ENCODE measurements at regions of chr13 and their contacts with region 1.

Region 1: GRCh38 chr13:99606324-99607066 is 105.2 kb downstream of the TM9SF2 start:
- DNase-seq: peak; percentile 82 to 95 (median 91)
- ATAC-seq: peak; percentile 93
- H3K4me3 ChIP-seq: peak within 1 kb of the TSS; percentile 89 to 93
- H3K4me3 Mint-ChIP-seq: peak within 1 kb of the TSS; percentile 92
- H3K27ac ChIP-seq: peak within 1 kb of the TSS; percentile 72 to 81
- H3K27ac Mint-ChIP-seq: peak within 1 kb of the TSS; percentile 92
- H3K4me1 ChIP-seq: peaks cover 23% of the 10 kb centered on the region
- H3K4me1 Mint-ChIP-seq: peaks cover 45% of the 10 kb centered on the region
- H3K27me3 ChIP-seq: no peaks in the 10 kb centered on the region
- H3K27me3 Mint-ChIP-seq: no peaks in the 10 kb centered on the region
- CTCF ChIP-seq: no peak

Region 2: DNA sequence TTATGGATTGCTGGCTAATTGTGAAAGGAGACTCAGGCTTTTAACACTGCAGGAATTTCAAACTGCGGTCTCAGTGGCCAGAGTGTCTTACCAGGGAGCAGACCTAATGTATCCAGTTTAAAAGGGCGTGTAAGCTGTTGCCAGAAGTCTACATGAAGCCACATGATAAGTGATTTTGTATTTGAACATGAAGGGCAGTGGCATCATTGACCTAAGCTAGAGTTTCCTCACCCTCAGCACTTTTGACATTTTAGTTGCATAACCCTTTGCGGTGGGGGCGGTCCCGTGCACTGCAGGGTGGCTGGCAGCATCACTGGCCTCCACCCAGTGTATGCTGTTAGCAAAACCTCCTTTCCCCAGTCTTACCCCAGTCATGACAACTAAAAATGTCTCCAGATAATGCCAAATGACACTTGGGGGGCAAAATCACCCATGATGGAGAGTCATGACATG is 324.7 kb before region 1 on chr13:
- CTCF ChIA-PET with region 1: no interaction called
- POLR2A ChIA-PET with region 1: no interaction called
- intact Hi-C with region 1: loop called in 1 of 2 experiments (anchors 10 kb)
- DNase-seq: peak in 6 of 9 experiments; percentile 59 to 81 (median 71)
- ATAC-seq: peak; percentile 65
- H3K4me3 ChIP-seq: no peak overlapping the region
- H3K4me3 Mint-ChIP-seq: peak overlapping the region; percentile 38
- H3K27ac ChIP-seq: peak overlapping the region; percentile 53 to 73
- H3K27ac Mint-ChIP-seq: peak overlapping the region; percentile 95
- H3K4me1 ChIP-seq: peaks cover 92% of the 10 kb centered on the region
- H3K4me1 Mint-ChIP-seq: peaks cover 90% of the 10 kb centered on the region
- H3K27me3 ChIP-seq: no peaks in the 10 kb centered on the region
- H3K27me3 Mint-ChIP-seq: no peaks in the 10 kb centered on the region
- CTCF ChIP-seq: no peak

Region 3: DNA sequence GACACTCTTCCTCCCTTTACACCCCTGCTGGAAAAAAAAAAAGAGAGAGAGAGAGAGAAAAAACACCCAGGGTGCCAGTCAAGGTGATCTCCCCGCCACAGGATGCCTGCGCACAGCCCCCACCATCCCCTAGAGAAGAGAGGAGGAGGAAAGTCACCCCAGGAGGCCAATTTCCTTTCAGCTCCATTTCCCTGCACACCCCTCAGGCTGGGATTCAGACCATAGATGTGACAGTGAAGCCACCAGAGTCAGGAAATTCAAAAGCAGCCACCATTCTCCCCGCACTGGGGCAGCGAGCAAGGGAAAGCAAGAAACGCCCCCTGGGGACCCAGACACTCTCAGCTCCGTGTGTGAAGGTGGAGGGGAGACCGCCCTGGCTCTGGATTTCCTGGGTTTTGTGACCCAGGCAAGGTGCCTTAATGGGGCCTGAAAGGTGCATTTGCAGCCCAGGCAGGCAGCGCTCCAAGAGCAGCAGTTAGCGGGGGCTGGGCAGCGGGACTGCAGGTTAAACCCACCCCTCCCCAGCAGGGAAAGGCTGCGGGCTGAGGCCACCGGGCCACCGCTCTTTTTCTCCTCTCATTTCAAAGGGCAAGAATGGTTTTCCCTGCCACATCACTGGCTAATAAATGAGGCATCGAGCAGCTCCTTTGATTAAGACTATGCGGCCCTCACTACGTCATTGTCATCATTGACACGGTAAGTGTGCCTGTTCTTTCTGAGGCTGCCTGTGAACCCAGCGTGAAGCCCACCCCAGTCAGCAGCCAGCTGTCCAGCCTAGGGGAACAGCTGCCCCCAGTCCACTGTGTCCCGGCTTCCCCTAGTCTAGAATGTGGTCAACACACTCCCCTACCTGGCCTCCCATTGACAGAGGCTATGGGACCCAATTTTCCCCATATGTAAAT is 189.0 kb before region 1 on chr13:
- CTCF ChIA-PET with region 1: no interaction called
- POLR2A ChIA-PET with region 1: no interaction called
- intact Hi-C with region 1: no loop called
- DNase-seq: peak in 4 of 9 experiments; percentile 43 to 77 (median 64)
- ATAC-seq: peak; percentile 36
- H3K4me3 ChIP-seq: peak overlapping the region; percentile 35 to 57
- H3K4me3 Mint-ChIP-seq: no peak overlapping the region
- H3K27ac ChIP-seq: peak overlapping the region; percentile 43 to 60
- H3K27ac Mint-ChIP-seq: no peak overlapping the region
- H3K4me1 ChIP-seq: peaks cover 96% of the 10 kb centered on the region
- H3K4me1 Mint-ChIP-seq: peaks cover 63% of the 10 kb centered on the region
- H3K27me3 ChIP-seq: no peaks in the 10 kb centered on the region
- H3K27me3 Mint-ChIP-seq: no peaks in the 10 kb centered on the region
- CTCF ChIP-seq: no peak

Region 4: GRCh38 chr13:99564386-99564785 is 42.1 kb before region 1 on chr13:
- CTCF ChIA-PET with region 1: no interaction called
- POLR2A ChIA-PET with region 1: no interaction called
- intact Hi-C with region 1: loop called in 1 of 2 experiments (anchors 5 kb)
- DNase-seq: no peak
- ATAC-seq: no peak
- H3K4me3 ChIP-seq: no peak overlapping the region
- H3K4me3 Mint-ChIP-seq: no peak overlapping the region
- H3K27ac ChIP-seq: no peak overlapping the region
- H3K27ac Mint-ChIP-seq: no peak overlapping the region
- H3K4me1 ChIP-seq: peaks cover 5% of the 10 kb centered on the region
- H3K4me1 Mint-ChIP-seq: peaks cover 6% of the 10 kb centered on the region
- H3K27me3 ChIP-seq: no peaks in the 10 kb centered on the region
- H3K27me3 Mint-ChIP-seq: no peaks in the 10 kb centered on the region
- CTCF ChIP-seq: no peak

Region 5: DNA sequence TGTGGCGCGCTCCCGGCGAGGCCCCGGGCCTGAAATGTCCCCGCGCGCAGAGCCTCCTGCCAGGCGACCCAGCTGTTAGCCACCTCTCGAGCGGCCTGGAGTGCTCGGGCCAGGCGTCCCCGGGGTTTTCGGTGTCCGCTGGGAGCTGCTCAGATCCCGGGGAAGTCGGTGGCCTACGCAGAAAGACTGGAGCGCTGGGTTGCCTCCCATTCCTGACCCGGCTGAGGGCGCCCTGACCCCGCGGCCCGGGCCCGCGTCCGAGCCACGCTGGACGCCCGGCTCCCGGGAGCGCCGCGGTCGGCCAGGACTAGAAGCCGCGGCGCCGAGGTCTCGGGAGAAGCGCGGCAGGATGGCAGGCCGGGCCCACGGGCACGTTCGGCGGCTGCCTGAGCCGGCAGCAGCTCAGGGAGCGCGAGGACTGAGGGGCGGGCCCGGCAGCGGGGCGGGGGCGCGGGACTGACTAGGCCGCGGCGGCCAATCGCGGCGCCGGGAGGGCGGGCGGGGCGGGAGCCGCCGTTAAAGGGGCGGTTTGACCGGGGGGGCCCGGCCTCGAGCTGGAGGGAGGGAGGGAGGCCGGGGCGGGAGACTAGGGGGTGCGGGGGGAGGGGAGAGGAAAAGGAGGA is 373.8 kb after region 1 on chr13:
- CTCF ChIA-PET with region 1: no interaction called
- POLR2A ChIA-PET with region 1: no interaction called
- intact Hi-C with region 1: loop called in 1 of 2 experiments (anchors 5 kb)
- DNase-seq: peak in 7 of 9 experiments; percentile 33 to 74 (median 65)
- ATAC-seq: peak; percentile 84
- H3K4me3 ChIP-seq: peak overlapping the region in 1 of 2 experiments; percentile 36
- H3K4me3 Mint-ChIP-seq: no peak overlapping the region
- H3K27ac ChIP-seq: no peak overlapping the region
- H3K27ac Mint-ChIP-seq: no peak overlapping the region
- H3K4me1 ChIP-seq: peaks cover 25% of the 10 kb centered on the region
- H3K4me1 Mint-ChIP-seq: peaks cover 14% of the 10 kb centered on the region
- H3K27me3 ChIP-seq: peaks cover 66 to 70% of the 10 kb centered on the region in 2 experiments
- H3K27me3 Mint-ChIP-seq: peaks cover 62% of the 10 kb centered on the region
- CTCF ChIP-seq: no peak

Region 6: GRCh38 chr13:100588331-100589177 is 982.1 kb after region 1 on chr13 and contains the start of gene GGACT:
- CTCF ChIA-PET with region 1: no interaction called
- POLR2A ChIA-PET with region 1: no interaction called
- intact Hi-C with region 1: loop called in 1 of 2 experiments (anchors 5 kb)
- DNase-seq: peak; percentile 68 to 93 (median 85)
- ATAC-seq: peak; percentile 95
- H3K4me3 ChIP-seq: peak within 1 kb of the TSS; percentile 65 to 70
- H3K4me3 Mint-ChIP-seq: peak within 1 kb of the TSS; percentile 84
- H3K27ac ChIP-seq: peak within 1 kb of the TSS; percentile 80 to 82
- H3K27ac Mint-ChIP-seq: peak within 1 kb of the TSS; percentile 89
- H3K4me1 ChIP-seq: peaks cover 39% of the 10 kb centered on the region
- H3K4me1 Mint-ChIP-seq: peaks cover 44% of the 10 kb centered on the region
- H3K27me3 ChIP-seq: no peaks in the 10 kb centered on the region
- H3K27me3 Mint-ChIP-seq: no peaks in the 10 kb centered on the region
- CTCF ChIP-seq: peak; percentile 74
- total RNA-seq, gene GGACT: 0.98 to 1.1 TPM

Measured in CD8-positive, alpha-beta T cell (primary cell).